A549 (cell line): ENCODE measurements at regions of chr17 and their contacts with region 1.

Region 1: DNA sequence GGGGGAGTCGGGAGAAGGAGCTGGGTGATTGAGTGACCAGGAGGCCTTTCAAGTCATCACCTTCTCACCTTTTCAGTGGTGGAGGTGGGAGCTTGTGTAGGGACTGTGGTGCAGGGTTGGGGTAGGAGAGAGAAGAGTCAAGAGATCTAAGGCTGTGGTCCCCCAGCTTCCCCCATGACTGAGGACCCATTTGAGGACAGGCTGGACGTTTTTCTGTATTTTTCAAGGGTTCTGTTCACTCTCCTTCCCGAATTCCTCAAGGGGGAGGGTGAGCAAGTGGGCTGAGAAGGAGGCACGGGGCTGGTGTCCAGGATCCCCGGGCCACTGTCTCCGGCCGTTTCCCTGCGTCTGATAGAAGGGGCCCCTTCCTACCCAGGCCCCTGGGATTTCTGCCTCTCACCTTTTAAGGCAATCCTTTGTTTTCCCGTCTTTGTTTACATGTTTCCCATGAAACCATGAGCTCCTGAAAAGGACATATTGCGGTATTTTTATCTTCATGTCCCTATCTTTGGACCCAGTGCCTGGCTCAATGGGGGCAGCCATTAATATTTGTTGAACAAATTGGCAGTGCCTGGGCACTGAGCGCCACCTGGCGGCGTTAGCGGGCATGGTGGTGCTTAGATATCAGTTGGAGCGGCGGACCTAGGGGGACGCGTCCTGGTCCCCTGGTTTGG is 9.2 kb upstream of the CD300A start:
- DNase-seq: peak; percentile 72 to 82
- ATAC-seq: peak; percentile 32 to 59; a peak in 4 of 6 replicates
- H3K4me3 ChIP-seq: no peak overlapping the region
- H3K27ac ChIP-seq: peak overlapping the region in 1 of 2 experiments; percentile 59; a peak in 3 of 6 replicates
- H3K4me1 ChIP-seq: peaks cover 16% of the 10 kb centered on the region
- CTCF ChIP-seq: peak; percentile 99
- EP300 ChIP-seq: no peak
- POLR2A ChIP-seq: no peak
- RAD21 ChIP-seq: peak; percentile 100

Region 2: GRCh38 chr17:74337834-74338500 is 119.3 kb before region 1 on chr17:
- CTCF ChIA-PET with region 1: interaction called, 13 read pairs
- POLR2A ChIA-PET with region 1: no interaction called
- DNase-seq: no peak
- ATAC-seq: peak in 1 of 2 experiments; percentile 19; a peak in 3 of 6 replicates
- H3K4me3 ChIP-seq: no peak overlapping the region
- H3K27ac ChIP-seq: no peak overlapping the region
- H3K4me1 ChIP-seq: no peaks in the 10 kb centered on the region
- CTCF ChIP-seq: no peak
- EP300 ChIP-seq: no peak
- POLR2A ChIP-seq: no peak
- RAD21 ChIP-seq: no peak

Region 3: DNA sequence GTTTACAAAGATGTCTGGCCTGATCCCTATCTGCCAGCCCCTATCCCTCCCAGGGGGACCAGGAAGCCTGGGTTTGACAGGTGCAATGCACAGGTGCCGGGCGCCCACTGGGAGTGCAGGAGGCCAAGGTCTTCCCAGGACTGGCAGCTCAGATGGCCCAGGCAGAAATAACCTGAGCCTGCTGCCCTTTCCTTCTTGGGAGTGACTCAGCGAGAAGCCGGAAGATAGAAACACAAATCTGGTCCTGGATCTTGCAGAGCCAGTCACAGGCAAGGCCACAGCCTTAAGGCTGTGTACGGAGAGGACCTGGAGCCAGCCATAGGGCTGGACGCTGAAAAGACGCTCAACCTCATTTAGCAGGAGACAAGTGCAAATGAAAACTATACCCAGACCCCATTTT is 62.3 kb before region 1 on chr17:
- CTCF ChIA-PET with region 1: interaction called, 127 read pairs
- POLR2A ChIA-PET with region 1: no interaction called
- DNase-seq: peak in 1 of 2 experiments; percentile 27
- ATAC-seq: peak; percentile 41 to 49; a peak in 5 of 6 replicates
- H3K4me3 ChIP-seq: no peak overlapping the region
- H3K27ac ChIP-seq: peak overlapping the region in 1 of 2 experiments; percentile 42; a peak in 2 of 6 replicates
- H3K4me1 ChIP-seq: peaks cover 5% of the 10 kb centered on the region; the same call in 2 of the 3 replicates
- CTCF ChIP-seq: no peak
- EP300 ChIP-seq: no peak
- POLR2A ChIP-seq: no peak
- RAD21 ChIP-seq: no peak

Region 4: DNA sequence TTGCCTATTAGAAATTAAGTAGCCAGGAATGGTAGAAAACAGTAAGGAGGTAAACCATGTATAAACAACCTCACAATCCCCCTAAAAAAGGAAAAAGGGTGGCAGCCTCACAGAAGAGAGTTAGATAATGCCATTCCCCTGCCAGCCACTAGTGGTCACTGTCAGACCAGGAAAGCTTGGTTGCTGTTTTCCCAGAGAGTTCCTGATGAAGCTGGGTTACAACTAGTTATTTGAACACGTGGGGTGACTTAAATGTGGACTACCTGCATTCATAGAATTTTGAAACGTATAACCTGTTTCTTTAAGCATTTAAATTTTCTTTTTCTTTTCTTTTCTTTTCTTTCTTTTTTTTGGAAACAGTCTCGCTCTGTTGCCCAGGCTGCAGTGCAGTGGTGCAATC is 19.6 kb before region 1 on chr17:
- CTCF ChIA-PET with region 1: interaction called, 109 read pairs
- POLR2A ChIA-PET with region 1: interaction called, 3 read pairs
- DNase-seq: peak in 1 of 2 experiments; percentile 43
- ATAC-seq: no peak
- H3K4me3 ChIP-seq: no peak overlapping the region
- H3K27ac ChIP-seq: no peak overlapping the region
- H3K4me1 ChIP-seq: peaks cover 18% of the 10 kb centered on the region
- CTCF ChIP-seq: peak; percentile 50
- EP300 ChIP-seq: no peak
- POLR2A ChIP-seq: no peak
- RAD21 ChIP-seq: peak in 1 of 2 experiments; percentile 52; a peak in 2 of 5 replicates

Region 5: DNA sequence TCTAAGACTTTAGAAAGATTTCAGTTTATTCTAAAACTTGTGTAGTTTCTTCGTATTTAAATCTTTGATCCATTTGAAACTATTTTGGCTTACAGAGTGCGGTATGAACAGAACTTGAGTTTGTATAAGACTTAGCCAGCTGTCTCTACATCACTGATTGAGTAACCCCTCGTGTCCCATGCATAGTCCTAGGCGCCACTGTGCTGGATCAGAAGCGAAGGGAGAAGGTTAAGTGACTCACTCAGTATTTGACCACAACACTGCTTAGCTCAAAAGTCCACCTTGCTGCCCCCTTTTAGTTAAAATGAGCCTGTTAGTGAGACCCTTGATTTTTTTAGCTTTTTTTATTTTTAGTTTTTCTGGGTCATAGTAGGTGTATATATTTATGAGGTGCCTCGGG is 45.6 kb after region 1 on chr17:
- CTCF ChIA-PET with region 1: interaction called, 36 read pairs
- POLR2A ChIA-PET with region 1: no interaction called
- DNase-seq: no peak
- ATAC-seq: no peak
- H3K4me3 ChIP-seq: no peak overlapping the region
- H3K27ac ChIP-seq: no peak overlapping the region
- H3K4me1 ChIP-seq: no peaks in the 10 kb centered on the region
- CTCF ChIP-seq: no peak
- EP300 ChIP-seq: no peak
- POLR2A ChIP-seq: no peak
- RAD21 ChIP-seq: no peak

Region 6: GRCh38 chr17:74541176-74542111 is 84.2 kb after region 1 on chr17:
- CTCF ChIA-PET with region 1: no interaction called
- POLR2A ChIA-PET with region 1: no interaction called
- DNase-seq: no peak
- ATAC-seq: no peak
- H3K4me3 ChIP-seq: no peak overlapping the region
- H3K27ac ChIP-seq: no peak overlapping the region
- H3K4me1 ChIP-seq: no peaks in the 10 kb centered on the region
- CTCF ChIP-seq: no peak
- EP300 ChIP-seq: no peak
- POLR2A ChIP-seq: no peak
- RAD21 ChIP-seq: no peak

Region 7: DNA sequence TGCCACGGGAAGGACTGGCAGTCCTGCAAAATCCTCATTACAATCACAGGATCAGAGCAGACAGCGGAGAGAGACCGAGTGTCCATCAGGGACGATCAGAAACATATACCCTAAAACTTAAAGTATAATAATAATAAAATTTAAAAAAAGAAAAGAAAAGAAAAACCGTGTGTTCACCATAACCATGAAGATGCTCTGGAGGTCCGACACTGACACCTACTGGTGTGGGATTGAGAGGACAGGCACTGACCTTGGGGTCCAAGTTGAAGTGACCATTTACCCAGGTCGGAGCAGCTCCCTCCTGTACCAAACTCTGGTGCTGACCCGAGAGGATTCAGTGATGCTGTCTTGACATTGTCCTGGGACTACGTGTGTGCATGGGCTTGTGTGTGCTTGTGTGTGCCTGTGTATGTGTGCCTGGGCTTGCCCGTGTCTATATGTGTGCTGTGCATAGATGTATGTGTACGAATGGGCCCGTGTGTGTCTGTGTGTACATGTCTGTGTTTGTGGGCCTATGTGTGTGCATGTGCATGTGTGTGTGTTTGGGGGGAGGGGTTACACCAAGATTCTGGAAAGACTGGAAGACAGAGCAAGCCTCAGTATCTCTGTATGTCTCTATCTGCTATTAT is 144.8 kb after region 1 on chr17:
- CTCF ChIA-PET with region 1: interaction called, 16 read pairs
- POLR2A ChIA-PET with region 1: interaction called, 3 read pairs
- DNase-seq: peak; percentile 70 to 79
- ATAC-seq: peak; percentile 65 to 85; a peak in 4 of 6 replicates
- H3K4me3 ChIP-seq: no peak overlapping the region
- H3K27ac ChIP-seq: peak overlapping the region in 1 of 2 experiments; percentile 44; a peak in 2 of 6 replicates
- H3K4me1 ChIP-seq: peaks cover 12% of the 10 kb centered on the region
- CTCF ChIP-seq: peak; percentile 96
- EP300 ChIP-seq: no peak
- POLR2A ChIP-seq: no peak
- RAD21 ChIP-seq: peak; percentile 91 to 93

Region 8: GRCh38 chr17:74798239-74798707 is 341.0 kb after region 1 on chr17:
- CTCF ChIA-PET with region 1: no interaction called
- POLR2A ChIA-PET with region 1: no interaction called
- DNase-seq: no peak
- ATAC-seq: no peak
- H3K4me3 ChIP-seq: no peak overlapping the region
- H3K27ac ChIP-seq: no peak overlapping the region
- H3K4me1 ChIP-seq: no peaks in the 10 kb centered on the region
- CTCF ChIP-seq: no peak
- EP300 ChIP-seq: no peak
- POLR2A ChIP-seq: no peak
- RAD21 ChIP-seq: no peak